ENCODE measurements at regions of chr6 and their contacts with region 1.

Region 1: DNA sequence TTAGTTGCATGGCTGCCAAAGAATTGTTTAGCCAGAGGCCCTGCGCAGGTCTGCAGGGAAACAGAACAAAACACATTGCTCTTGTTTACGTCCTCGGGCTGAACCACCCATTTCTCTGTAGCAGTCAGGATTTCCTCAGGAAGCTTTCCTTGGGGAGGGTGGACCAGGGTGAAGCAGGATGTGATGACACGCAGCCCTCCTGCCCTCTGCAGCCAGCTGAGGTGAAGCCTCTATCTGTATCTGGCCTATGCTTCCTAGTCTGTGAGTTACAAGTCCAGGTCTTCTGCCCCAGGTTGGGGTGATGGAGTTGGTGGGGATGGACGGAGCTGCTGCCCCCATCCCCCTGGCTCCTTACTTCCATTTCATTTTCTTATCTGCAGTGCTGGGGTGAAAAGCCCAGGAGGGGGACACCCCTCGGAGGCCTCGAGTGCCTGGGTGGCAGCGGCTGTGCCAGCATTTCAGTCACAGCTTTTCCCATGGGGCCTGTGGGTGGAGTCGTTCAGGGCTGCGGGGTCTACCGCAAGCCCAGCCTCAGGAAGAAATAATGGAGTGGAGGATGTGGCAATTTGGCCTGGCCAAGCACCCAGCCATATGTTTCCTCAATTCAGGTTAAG is 24.9 kb downstream of the SASH1 start:
- DNase-seq: peak; percentile 99
- H3K4me3 ChIP-seq: no peak overlapping the region
- H3K27ac ChIP-seq: peak overlapping the region; percentile 96
- H3K4me1 ChIP-seq: peaks cover 75% of the 10 kb centered on the region
- H3K27me3 ChIP-seq: no peaks in the 10 kb centered on the region
- CTCF ChIP-seq: no peak
- POLR2A ChIP-seq: no peak

Region 2: GRCh38 chr6:148144917-148145521 is 222.5 kb before region 1 on chr6:
- CTCF ChIA-PET with region 1: no interaction called
- POLR2A ChIA-PET with region 1: no interaction called
- dilution Hi-C with region 1: no loop called
- intact Hi-C with region 1: loop called (anchors 1 kb)
- DNase-seq: peak; percentile 74
- H3K4me3 ChIP-seq: no peak overlapping the region
- H3K27ac ChIP-seq: peak overlapping the region; percentile 99
- H3K4me1 ChIP-seq: peaks cover 41% of the 10 kb centered on the region
- H3K27me3 ChIP-seq: no peaks in the 10 kb centered on the region
- CTCF ChIP-seq: peak; percentile 75 to 81
- POLR2A ChIP-seq: no peak

Region 3: DNA sequence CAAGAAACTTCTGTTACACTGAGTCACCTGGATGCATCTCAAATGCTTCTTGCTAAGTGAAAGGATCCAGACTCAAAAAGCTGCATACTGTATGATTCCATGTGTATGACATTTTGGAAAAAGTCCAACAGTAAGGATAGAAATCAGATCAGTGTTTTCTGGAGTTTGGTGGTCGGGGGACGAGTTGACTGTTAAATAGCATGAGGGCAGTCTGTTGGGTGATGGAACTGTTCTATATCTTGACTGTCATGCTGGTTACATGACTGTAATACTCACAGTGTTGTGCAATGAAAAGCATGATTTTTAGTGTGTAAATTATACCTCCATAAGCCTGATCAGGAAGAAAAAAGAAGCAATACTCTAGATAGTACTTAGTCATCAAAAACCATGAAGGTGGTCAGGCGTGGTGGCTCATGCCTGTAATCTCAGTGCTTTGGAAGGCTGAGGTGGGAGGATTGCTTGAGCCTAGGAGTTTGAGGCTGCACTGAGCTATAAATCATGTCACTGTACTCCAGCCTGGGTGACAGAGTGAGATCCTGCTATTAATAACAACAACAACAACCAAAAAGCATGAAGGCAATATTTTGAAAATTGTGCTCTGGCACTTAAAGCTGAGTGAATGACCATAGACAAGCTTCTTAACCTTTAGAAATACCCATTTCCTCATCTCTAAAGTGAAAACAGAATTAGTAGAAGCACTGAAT is 55.4 kb before region 1 on chr6:
- CTCF ChIA-PET with region 1: interaction called, 3 read pairs
- POLR2A ChIA-PET with region 1: no interaction called
- dilution Hi-C with region 1: no loop called
- intact Hi-C with region 1: loop called (anchors 1 kb)
- DNase-seq: no peak
- H3K4me3 ChIP-seq: no peak overlapping the region
- H3K27ac ChIP-seq: no peak overlapping the region
- H3K4me1 ChIP-seq: peaks cover 12% of the 10 kb centered on the region
- H3K27me3 ChIP-seq: no peaks in the 10 kb centered on the region
- CTCF ChIP-seq: no peak
- POLR2A ChIP-seq: no peak

Region 4: DNA sequence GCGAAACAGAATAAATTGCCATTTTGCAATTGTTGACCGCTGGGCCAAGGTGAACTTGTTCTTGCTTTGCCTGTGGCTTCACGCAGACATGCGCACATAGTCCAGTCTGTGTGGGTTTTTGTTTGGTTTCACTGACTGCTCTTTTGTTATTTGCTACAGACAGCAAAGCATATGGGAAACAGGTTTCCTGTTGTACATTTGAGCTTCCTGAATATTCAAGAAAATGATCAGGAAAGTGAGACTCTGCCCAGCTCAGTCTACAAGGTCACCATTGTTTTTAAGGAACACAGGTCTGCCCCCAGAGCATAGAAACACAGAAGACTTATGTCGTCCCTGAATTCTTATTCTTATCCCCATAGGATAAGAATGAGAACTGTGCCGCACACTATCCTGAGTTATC is 30.7 kb after region 1 on chr6:
- CTCF ChIA-PET with region 1: interaction called, 4 read pairs
- POLR2A ChIA-PET with region 1: no interaction called
- dilution Hi-C with region 1: no loop called
- intact Hi-C with region 1: loop called (anchors 1 kb)
- DNase-seq: peak; percentile 95
- H3K4me3 ChIP-seq: peak overlapping the region in 1 of 3 experiments; percentile 3
- H3K27ac ChIP-seq: peak overlapping the region; percentile 98
- H3K4me1 ChIP-seq: peaks cover 41% of the 10 kb centered on the region
- H3K27me3 ChIP-seq: no peaks in the 10 kb centered on the region
- CTCF ChIP-seq: no peak
- POLR2A ChIP-seq: peak; percentile 52

Region 5: GRCh38 chr6:148440877-148441453 is 73.4 kb after region 1 on chr6:
- CTCF ChIA-PET with region 1: interaction called, 4 read pairs
- POLR2A ChIA-PET with region 1: no interaction called
- dilution Hi-C with region 1: no loop called
- intact Hi-C with region 1: loop called (anchors 1 kb)
- DNase-seq: peak; percentile 86
- H3K4me3 ChIP-seq: no peak overlapping the region
- H3K27ac ChIP-seq: peak overlapping the region; percentile 98
- H3K4me1 ChIP-seq: peaks cover 62% of the 10 kb centered on the region
- H3K27me3 ChIP-seq: no peaks in the 10 kb centered on the region
- CTCF ChIP-seq: no peak
- POLR2A ChIP-seq: no peak

Region 6: GRCh38 chr6:148464319-148465010 is 96.9 kb after region 1 on chr6:
- CTCF ChIA-PET with region 1: interaction called, 5 read pairs
- POLR2A ChIA-PET with region 1: no interaction called
- dilution Hi-C with region 1: no loop called
- intact Hi-C with region 1: loop called (anchors 1 kb)
- DNase-seq: peak; percentile 86
- H3K4me3 ChIP-seq: no peak overlapping the region
- H3K27ac ChIP-seq: peak overlapping the region; percentile 42
- H3K4me1 ChIP-seq: peaks cover 37% of the 10 kb centered on the region
- H3K27me3 ChIP-seq: no peaks in the 10 kb centered on the region
- CTCF ChIP-seq: peak; percentile 76 to 94
- POLR2A ChIP-seq: no peak